Heart left ventricle (tissue), 16 donors: ENCODE measurements at regions of chr4 and their contacts with region 1.

Region 1: GRCh38 chr4:25993395-25994185 is 79.6 kb downstream of the SMIM20 start:
- DNase-seq: peak in 4 of 5 donors; percentile 33 to 67 (median 40)
- ATAC-seq: peak in 3 of 4 donors; percentile 68 to 75 (median 71)
- H3K4me3 ChIP-seq: no peak overlapping the region
- H3K27ac ChIP-seq: peak overlapping the region in 2 of 12 donors; percentile 34
- H3K4me1 ChIP-seq: peaks cover 0 to 25% (median 0%) of the 10 kb centered on the region in 12 donors
- H3K27me3 ChIP-seq: no peaks in the 10 kb centered on the region
- CTCF ChIP-seq: peak in 7 of 12 donors; percentile 9 to 34 (median 13)
- POLR2A ChIP-seq: no peak

Region 2: GRCh38 chr4:25981749-25982148 is 11.8 kb before region 1 on chr4:
- intact Hi-C with region 1: loop called in 1 of 10 experiments (anchors 1 kb)
- DNase-seq: peak in 2 of 5 donors; percentile 68 to 84
- ATAC-seq: peak; percentile 88 to 97 (median 95)
- H3K4me3 ChIP-seq: no peak overlapping the region
- H3K27ac ChIP-seq: no peak overlapping the region
- H3K4me1 ChIP-seq: no peaks in the 10 kb centered on the region
- H3K27me3 ChIP-seq: no peaks in the 10 kb centered on the region
- CTCF ChIP-seq: no peak
- POLR2A ChIP-seq: no peak

Region 3: GRCh38 chr4:26048378-26048882 is 54.8 kb after region 1 on chr4:
- intact Hi-C with region 1: no loop called
- DNase-seq: peak in 4 of 5 donors; percentile 32 to 73 (median 46)
- ATAC-seq: peak; percentile 65 to 85 (median 72)
- H3K4me3 ChIP-seq: no peak overlapping the region
- H3K27ac ChIP-seq: peak overlapping the region; percentile 49 to 80 (median 68)
- H3K4me1 ChIP-seq: peaks cover 0 to 44% (median 0%) of the 10 kb centered on the region in 12 donors
- H3K27me3 ChIP-seq: peaks cover 0 to 6% (median 0%) of the 10 kb centered on the region in 9 donors
- CTCF ChIP-seq: no peak
- POLR2A ChIP-seq: no peak

Region 4: GRCh38 chr4:26076000-26076587 is 82.5 kb after region 1 on chr4:
- intact Hi-C with region 1: loop called in 1 of 10 experiments (anchors 10 kb)
- DNase-seq: no peak
- ATAC-seq: peak; percentile 26 to 83 (median 72)
- H3K4me3 ChIP-seq: no peak overlapping the region
- H3K27ac ChIP-seq: peak overlapping the region in 6 of 12 donors; percentile 14 to 84 (median 41)
- H3K4me1 ChIP-seq: peaks cover 0 to 60% (median 0%) of the 10 kb centered on the region in 12 donors
- H3K27me3 ChIP-seq: peaks cover 0 to under 1% (median 0%) of the 10 kb centered on the region in 9 donors
- CTCF ChIP-seq: no peak
- POLR2A ChIP-seq: no peak